ENCODE measurements at regions of chr17 and their contacts with region 1.

Region 1: DNA sequence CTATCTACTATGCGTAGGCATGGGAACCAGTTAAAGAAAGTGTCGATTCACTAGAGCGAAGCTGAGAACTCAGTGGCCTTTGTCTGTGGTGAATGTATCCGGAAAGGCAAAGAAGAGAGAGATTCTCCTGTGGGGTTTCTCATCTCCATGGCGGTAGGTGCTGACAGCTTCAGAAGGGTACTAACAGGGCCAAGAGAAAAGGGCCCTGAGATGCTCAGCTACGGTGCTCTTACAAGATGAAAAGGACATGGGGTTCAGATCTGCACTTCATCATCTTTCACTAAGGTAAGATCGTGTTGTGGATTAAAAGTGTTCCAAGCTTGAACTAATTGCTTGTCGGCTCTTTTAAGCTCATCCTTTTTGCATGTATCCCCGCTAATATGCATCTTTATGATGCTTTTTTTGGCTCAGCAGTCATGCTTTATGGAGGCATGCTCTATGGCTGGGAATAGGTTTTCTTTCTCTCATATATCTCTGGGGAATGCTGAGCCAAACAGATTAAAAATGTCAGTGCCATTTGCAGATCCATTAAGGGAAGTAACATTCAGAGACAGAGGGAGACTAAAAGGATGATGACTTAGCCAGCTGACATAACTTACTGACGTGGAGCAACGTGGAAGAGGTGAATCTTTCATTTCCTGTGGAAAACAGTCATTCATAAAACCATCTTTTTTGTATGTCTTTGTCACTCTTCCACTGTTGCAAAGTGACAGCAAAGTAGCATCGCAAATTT is 29.9 kb downstream of the KCNJ16 start:
- DNase-seq: no peak
- H3K4me3 ChIP-seq: no peak overlapping the region
- H3K27me3 ChIP-seq: no peaks in the 10 kb centered on the region
- CTCF ChIP-seq: no peak

Region 2: DNA sequence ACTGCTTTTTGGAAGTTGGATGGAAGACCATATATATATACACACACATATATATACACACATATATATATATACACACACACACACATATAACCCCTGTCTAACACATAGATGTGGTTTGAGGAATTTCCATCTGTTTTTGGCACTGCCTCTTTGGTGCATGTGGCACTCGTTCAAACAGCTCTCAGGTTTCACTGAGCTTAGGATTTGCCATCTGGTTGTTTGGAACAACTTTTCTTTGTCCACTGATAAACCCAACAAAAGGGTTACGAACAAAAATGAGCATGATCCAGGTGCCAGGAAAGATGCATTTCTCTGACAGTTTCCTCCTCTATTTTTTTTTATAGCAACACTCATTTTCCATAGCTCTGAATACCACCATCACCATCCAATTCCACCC is 44.5 kb before region 1 on chr17:
- CTCF ChIA-PET with region 1: no interaction called
- POLR2A ChIA-PET with region 1: interaction called, 21 read pairs
- DNase-seq: no peak
- H3K4me3 ChIP-seq: no peak overlapping the region
- H3K27me3 ChIP-seq: no peaks in the 10 kb centered on the region
- CTCF ChIP-seq: no peak

Region 3: GRCh38 chr17:70201872-70202419 is 97.0 kb after region 1 on chr17:
- CTCF ChIA-PET with region 1: no interaction called
- POLR2A ChIA-PET with region 1: no interaction called
- DNase-seq: no peak
- H3K4me3 ChIP-seq: no peak overlapping the region
- H3K27me3 ChIP-seq: no peaks in the 10 kb centered on the region
- CTCF ChIP-seq: no peak